A549 (cell line): ENCODE measurements at regions of chr5 and their contacts with region 1.

Region 1: GRCh38 chr5:79133657-79134451 is 22.2 kb downstream of the BHMT start:
- DNase-seq: peak; percentile 41 to 83
- ATAC-seq: peak; percentile 94 to 95
- H3K4me3 ChIP-seq: peak overlapping the region; percentile 33
- H3K27ac ChIP-seq: peak overlapping the region; percentile 75 to 84
- H3K4me1 ChIP-seq: peaks cover 4% of the 10 kb centered on the region; the same call in 2 of the 3 replicates
- CTCF ChIP-seq: peak; percentile 71
- EP300 ChIP-seq: no peak
- POLR2A ChIP-seq: no peak
- RAD21 ChIP-seq: peak; percentile 81 to 84

Region 2: DNA sequence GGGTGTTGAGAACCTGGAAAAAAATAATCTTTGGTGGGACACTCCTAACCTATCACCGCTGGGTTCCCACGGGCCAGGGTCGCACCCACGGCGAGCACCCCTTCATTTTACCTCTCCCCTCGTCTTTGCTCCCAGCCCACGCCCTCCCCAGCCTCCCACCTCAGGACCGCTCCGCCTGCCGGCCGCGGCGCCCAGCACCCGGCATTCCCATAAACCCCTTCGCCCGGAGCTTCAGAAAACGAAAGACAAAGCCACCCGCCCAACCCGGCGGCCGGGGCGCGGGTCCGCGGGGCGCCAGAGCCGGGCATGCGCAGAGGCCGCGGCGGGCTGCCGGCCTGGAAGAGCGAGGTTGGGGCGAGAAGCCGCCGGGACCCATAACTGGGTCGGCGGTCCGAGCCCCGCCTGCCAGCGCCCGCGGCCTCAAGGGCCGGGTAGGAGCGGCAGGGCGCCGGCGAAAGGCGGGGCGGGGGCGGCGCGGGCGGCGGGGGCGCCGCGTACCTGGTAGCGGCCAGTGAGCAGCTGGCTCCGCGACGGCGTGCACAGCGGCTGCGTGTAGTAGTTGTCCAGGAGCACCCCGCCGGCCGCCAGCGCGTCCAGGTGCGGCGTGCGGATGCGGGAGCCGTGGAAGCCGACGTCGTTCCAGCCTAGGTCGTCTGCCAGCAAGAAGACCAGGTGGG is 149.3 kb before region 1 on chr5:
- CTCF ChIA-PET with region 1: interaction called, 13 read pairs
- POLR2A ChIA-PET with region 1: interaction called, 7 read pairs
- DNase-seq: peak; percentile 85 to 92
- ATAC-seq: peak; percentile 84 to 91
- H3K4me3 ChIP-seq: peak overlapping the region; percentile 82
- H3K27ac ChIP-seq: peak overlapping the region; percentile 97 to 98
- H3K4me1 ChIP-seq: peaks cover 35% of the 10 kb centered on the region
- CTCF ChIP-seq: no peak
- EP300 ChIP-seq: no peak
- POLR2A ChIP-seq: peak; percentile 86
- RAD21 ChIP-seq: no peak

Region 3: DNA sequence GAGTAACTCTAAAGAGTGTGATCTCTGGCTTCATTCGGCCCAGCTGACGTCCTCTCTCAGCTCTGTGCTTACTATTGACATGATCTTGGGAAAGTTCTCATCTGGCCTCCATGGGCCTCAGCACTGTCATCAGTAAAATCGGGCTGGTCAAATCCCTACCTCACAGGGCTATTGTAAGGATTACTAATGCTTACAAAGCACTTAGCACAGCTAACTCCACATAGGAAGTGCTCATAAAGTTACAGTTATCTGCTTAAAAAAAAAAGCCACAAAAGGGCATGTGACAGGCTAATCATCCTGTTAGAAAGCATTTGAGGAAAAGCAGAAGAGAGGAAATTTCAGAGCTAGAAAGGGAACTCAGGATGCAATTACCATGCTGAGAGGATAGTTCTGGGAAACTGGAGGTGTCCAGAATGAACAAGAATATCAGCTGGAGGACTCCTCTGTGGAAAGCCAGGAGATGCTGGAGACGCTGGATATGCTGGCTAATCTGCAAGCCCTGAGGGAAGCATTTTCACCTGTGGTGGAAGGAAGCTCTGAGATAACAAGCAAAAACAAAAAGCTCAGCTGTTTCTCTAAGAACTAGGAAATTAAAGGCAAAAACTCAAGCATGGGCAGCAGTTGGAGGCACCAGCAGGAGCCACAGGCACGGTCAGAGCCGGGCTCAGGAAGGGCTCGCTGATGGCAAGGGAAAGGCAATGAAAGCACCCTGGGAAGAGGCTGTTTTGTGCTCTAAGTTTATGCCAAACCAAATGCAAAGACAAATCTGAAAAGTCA is 26.6 kb before region 1 on chr5:
- CTCF ChIA-PET with region 1: interaction called, 18 read pairs
- POLR2A ChIA-PET with region 1: no interaction called
- DNase-seq: no peak
- ATAC-seq: no peak; a peak in 1 of 6 replicates
- H3K4me3 ChIP-seq: no peak overlapping the region
- H3K27ac ChIP-seq: no peak overlapping the region
- H3K4me1 ChIP-seq: no peaks in the 10 kb centered on the region
- CTCF ChIP-seq: no peak
- EP300 ChIP-seq: no peak
- POLR2A ChIP-seq: no peak
- RAD21 ChIP-seq: no peak

Region 4: GRCh38 chr5:79151942-79152671 is 18.3 kb after region 1 on chr5:
- CTCF ChIA-PET with region 1: interaction called, 16 read pairs
- POLR2A ChIA-PET with region 1: no interaction called
- DNase-seq: no peak
- ATAC-seq: no peak
- H3K4me3 ChIP-seq: no peak overlapping the region
- H3K27ac ChIP-seq: no peak overlapping the region
- H3K4me1 ChIP-seq: no peaks in the 10 kb centered on the region
- CTCF ChIP-seq: no peak
- EP300 ChIP-seq: no peak
- POLR2A ChIP-seq: no peak
- RAD21 ChIP-seq: no peak

Region 5: DNA sequence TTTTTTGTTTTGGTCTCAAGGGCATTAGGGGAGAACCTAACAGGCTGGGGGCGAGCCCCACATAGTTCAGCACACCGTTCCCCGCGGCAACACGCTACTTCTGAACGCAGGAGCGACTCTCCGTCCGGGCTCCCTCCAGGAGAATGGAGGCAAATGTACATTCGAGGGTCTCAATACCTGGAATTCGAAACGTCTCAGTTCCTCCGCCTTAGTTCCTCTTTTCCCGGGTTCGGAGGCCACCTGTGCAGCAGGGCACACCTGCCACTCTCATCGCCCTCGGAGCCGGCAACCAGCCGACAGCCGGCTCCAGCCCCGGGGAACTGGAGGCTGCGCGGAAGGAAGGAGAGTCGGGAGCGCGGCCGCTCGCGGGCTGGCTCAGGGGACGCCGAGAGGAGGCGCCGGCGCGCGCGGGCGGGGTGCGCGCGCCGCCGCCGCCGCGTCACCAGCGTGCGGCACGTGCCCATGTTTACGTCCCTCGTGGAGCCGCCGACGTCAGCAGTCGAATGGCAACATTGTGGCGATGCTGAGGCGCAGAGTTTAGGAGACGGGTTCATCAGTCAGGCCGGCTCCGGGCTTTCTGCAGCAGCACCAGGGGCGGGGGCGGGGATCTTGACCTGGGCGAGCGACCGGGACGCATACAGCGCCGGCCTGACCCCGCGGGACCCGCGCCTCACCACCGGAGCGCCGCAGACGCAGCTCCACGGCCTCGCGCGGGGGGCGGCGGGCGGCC is 101.9 kb after region 1 on chr5 and contains the start of gene JMY:
- CTCF ChIA-PET with region 1: interaction called, 14 read pairs
- POLR2A ChIA-PET with region 1: no interaction called
- DNase-seq: peak; percentile 82
- ATAC-seq: peak; percentile 88 to 91
- H3K4me3 ChIP-seq: peak within 1 kb of the TSS; percentile 67
- H3K27ac ChIP-seq: peak within 1 kb of the TSS; percentile 73 to 87
- H3K4me1 ChIP-seq: peaks cover 14% of the 10 kb centered on the region; the same call in 1 of the 3 replicates
- CTCF ChIP-seq: 0 out of 3 replicates have a peak, but pooled peaks have one; percentile 8
- EP300 ChIP-seq: no peak
- POLR2A ChIP-seq: peak; percentile 63
- RAD21 ChIP-seq: no peak
- polyA plus RNA-seq, gene JMY: 5.0 and 5.6 TPM in 2 replicates

Region 6: DNA sequence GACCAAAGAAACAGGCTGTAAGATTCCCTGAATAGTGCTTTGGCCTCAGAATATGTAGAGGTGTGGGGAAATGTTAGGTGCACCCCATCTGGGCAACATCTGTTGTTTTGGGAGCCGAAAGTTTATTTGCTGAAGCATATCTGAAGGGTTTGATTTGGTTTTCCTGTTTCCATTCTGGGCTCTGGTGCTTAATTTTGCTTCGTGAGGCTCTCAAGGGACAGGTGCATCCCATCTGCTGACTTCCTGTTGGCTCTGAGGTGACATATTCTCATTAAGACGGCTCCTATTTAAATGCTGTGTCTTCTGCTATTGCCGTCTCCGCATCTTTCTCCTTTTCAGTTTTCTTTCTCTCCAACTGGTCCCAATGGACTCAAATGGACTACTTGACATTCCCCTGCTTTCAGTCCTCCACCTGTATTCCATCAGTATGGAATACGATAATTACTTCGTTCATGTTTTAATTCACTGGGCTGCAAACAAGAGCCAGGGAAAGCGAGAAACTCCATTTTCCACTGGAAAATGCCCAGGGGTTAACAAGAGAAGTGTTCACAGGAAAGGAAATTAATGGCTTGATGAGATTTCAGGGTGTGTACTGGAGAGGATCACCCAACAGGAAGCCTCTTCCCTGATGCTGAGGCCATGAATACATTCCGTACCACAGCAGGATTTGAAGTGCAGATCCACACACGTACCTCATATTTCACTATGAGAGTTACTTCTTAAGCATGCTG is 753.2 kb after region 1 on chr5:
- CTCF ChIA-PET with region 1: no interaction called
- POLR2A ChIA-PET with region 1: no interaction called
- DNase-seq: no peak
- ATAC-seq: no peak
- H3K4me3 ChIP-seq: no peak overlapping the region
- H3K27ac ChIP-seq: no peak overlapping the region
- H3K4me1 ChIP-seq: no peaks in the 10 kb centered on the region
- CTCF ChIP-seq: no peak
- EP300 ChIP-seq: no peak
- POLR2A ChIP-seq: no peak
- RAD21 ChIP-seq: no peak